WTC11 (cell line): ENCODE measurements at regions of chr1 and their contacts with region 1.

Region 1: DNA sequence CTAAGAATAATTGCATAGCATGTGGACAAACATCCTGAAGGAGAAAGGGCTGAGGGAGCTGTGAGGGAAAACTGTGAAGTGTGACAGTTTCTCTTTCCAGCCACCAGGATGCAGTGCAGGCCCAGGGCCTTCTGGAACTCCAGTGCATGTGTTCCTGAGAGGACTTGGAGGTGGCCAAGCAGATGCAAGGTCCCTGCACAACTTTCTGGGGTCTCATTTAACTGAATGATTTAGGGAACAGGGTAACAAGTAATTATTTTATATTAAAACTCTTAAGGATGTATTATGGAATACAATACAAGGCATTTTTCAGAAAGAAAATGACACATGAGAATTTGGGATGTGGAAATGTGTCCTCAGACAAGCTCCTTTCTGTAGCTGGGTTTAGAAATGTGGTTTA is 61.2 kb upstream of the MCOLN3 start:
- DNase-seq: peak; percentile 64
- ATAC-seq: peak; percentile 100
- H3K4me3 Mint-ChIP-seq: no peak overlapping the region
- H3K27ac Mint-ChIP-seq: no peak overlapping the region
- H3K4me1 Mint-ChIP-seq: no peaks in the 10 kb centered on the region
- H3K27me3 Mint-ChIP-seq: peaks cover 3% of the 10 kb centered on the region; the same call in 1 of the 2 replicates
- CTCF ChIP-seq: peak; percentile 59

Region 2: DNA sequence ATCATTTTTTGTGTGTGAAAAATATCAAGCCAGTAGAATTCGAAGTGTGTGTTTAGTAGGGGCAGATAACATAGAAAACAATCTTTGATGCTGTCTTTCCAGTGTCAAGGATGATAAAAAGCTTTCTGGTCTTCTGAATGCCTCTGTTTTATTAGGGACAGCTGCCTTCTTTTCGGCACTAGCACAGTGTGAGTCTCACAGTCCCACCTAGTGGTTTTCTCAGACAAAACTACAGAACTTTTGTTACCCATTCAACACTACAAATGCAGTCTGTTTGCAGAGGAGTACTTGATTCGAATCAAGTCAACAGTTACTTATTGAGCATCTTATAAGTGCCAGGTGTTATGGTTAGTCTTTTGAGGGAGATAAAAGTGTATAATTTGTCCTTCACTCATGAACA is 30.6 kb before region 1 on chr1:
- CTCF ChIA-PET with region 1: no interaction called
- POLR2A ChIA-PET with region 1: no interaction called
- DNase-seq: no peak
- ATAC-seq: peak; percentile 82
- H3K4me3 Mint-ChIP-seq: no peak overlapping the region
- H3K27ac Mint-ChIP-seq: no peak overlapping the region
- H3K4me1 Mint-ChIP-seq: 0 out of 2 replicates have a peak, but pooled peaks cover 2% of the 10 kb centered on the region
- H3K27me3 Mint-ChIP-seq: no peaks in the 10 kb centered on the region
- CTCF ChIP-seq: no peak

Region 3: DNA sequence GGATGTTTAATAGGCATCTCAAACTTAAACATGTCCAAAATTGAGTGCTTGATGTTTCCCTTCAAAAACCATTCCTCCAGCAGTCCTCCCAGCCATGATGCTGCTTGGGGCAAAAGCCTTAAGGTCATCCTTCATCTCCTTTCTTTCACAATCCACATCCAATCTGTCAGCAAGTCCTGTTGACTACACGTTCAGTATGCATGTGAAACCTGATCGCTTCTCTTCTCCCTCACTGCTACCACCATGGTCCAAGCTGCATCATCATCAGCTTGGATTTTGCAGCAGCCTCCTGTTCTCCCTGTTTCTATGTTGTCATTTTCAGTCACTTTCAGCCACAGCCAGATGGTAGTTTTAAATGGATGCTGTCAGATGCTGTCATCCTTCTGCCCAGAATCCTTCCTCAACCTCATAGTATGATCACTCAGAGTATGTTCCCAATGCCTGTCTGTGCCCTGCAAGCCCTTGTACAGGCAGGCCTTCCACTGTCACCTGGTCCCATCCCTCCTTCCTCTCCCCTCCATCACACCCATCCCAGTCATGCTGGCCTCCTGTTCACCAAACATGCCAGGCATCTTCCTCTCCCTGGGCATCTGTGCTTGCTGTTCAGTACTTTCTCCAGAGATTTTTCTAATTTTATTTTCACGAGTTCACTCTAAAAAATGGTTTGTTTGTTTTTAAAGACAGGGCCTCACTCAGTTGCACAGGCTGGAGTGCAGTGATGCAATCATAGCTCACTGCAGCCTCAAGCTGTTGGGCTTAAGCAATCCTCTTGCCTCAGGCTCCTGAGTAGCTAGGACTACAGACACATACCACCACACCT is 25.3 kb after region 1 on chr1:
- CTCF ChIA-PET with region 1: interaction called, 11 read pairs
- POLR2A ChIA-PET with region 1: no interaction called
- DNase-seq: no peak
- ATAC-seq: no peak
- H3K4me3 Mint-ChIP-seq: no peak overlapping the region
- H3K27ac Mint-ChIP-seq: no peak overlapping the region
- H3K4me1 Mint-ChIP-seq: no peaks in the 10 kb centered on the region
- H3K27me3 Mint-ChIP-seq: no peaks in the 10 kb centered on the region
- CTCF ChIP-seq: no peak

Region 4: DNA sequence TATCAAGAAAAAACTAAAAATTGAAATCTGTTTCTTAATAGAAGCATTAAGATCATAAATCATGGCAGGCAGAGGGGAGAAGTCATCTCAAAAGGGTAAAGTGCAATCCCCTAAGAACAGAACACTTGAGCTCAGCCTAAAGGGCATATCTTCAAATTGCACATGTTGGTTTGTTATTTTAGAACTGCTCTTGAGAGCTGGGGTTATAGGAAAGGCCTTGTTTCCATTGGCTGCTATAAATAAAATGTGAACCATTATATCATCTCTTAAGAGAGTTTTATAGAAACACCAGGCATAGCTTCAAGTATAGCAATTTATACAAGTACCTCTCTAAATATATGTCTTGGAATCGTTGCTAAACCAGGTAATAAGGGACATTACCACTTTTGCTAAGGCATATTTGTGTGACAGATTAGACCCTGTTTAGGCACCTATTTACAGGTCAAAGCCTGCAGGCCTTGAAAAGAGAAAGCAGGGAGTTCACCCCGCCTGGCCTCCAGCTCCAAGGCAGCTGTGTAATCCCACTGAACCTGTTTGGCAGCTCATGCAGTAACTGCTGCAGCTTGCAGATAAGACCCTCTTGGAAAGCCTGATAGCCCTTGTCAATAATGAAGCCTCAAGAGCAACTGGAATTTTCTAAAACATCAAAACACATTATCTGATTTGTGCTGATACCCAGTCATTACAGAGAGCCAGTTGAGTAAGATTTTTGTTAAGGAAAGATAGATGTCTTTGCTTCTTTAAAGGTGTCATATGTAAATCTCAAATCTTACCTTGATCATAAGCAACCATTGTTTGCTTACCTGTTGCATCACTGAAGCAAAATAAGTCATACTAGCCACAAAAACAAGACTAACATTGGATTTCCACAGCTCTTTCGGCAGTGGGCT is 115.5 kb after region 1 on chr1:
- CTCF ChIA-PET with region 1: interaction called, 19 read pairs
- POLR2A ChIA-PET with region 1: no interaction called
- DNase-seq: peak; percentile 70
- ATAC-seq: peak; percentile 96
- H3K4me3 Mint-ChIP-seq: peak overlapping the region; percentile 30; the same call in 1 of the 2 replicates
- H3K27ac Mint-ChIP-seq: peak overlapping the region; percentile 71
- H3K4me1 Mint-ChIP-seq: peaks cover 46% of the 10 kb centered on the region
- H3K27me3 Mint-ChIP-seq: no peaks in the 10 kb centered on the region
- CTCF ChIP-seq: no peak

Region 5: DNA sequence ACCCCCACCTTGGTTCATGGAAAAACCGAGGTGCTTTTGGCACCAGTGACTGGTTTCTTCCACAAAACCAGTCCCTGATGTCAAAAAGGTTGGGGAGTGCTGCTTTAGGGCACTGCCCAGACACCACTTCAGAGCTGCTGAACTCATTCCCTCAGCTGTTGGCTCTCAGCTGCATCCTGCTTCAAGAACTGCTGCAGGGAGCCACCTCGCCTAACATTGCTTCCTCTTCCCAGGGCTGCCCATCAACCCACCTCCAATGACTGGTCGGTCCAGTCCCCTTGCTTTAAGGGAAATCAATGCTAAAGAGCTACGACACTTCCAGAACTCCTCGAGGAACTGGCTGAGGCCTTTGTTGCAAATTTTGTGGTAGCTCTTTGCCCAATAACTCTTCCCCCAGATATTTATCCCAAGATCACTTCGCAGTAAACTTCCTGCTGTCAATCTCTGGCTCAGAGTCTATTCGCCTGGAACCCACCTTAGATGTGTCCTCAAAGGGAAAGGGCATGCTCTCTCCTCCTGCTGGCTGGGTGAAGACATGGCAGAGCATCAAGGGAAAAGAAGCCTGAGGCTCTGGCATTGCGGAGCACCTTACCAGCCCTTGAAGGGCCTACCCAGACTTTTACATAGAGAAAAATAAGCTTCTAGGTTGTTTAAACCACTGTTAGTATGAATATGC is 121.0 kb after region 1 on chr1:
- CTCF ChIA-PET with region 1: interaction called, 19 read pairs
- POLR2A ChIA-PET with region 1: no interaction called
- DNase-seq: peak; percentile 25
- ATAC-seq: peak; percentile 98
- H3K4me3 Mint-ChIP-seq: no peak overlapping the region
- H3K27ac Mint-ChIP-seq: no peak overlapping the region
- H3K4me1 Mint-ChIP-seq: peaks cover 28% of the 10 kb centered on the region
- H3K27me3 Mint-ChIP-seq: no peaks in the 10 kb centered on the region
- CTCF ChIP-seq: no peak

Region 6: DNA sequence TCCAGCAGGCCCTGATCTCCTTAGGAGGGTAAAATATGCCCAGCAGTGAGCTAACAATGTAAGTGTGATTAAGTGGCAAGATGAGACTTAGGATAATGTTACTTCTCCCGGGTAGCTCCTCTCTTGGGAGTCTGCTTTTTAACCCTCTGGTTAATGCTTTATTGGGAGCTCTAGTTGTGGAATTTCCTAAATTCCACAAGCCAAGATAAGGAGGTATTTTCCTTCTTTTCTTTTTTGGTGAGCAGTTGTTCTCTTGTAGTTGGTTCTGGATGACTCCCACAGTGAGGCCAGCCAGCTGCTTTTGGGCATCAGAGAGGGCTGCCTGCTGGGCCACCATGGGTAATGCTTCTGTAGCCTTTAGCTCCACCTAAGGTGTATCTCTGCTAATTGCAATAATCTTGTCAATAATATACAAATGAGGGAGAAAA is 130.7 kb after region 1 on chr1:
- CTCF ChIA-PET with region 1: interaction called, 58 read pairs
- POLR2A ChIA-PET with region 1: interaction called, 3 read pairs
- DNase-seq: peak; percentile 56
- ATAC-seq: peak; percentile 94
- H3K4me3 Mint-ChIP-seq: no peak overlapping the region
- H3K27ac Mint-ChIP-seq: no peak overlapping the region
- H3K4me1 Mint-ChIP-seq: peaks cover 25% of the 10 kb centered on the region
- H3K27me3 Mint-ChIP-seq: no peaks in the 10 kb centered on the region
- CTCF ChIP-seq: no peak